Breast epithelium (tissue), 4 donors: ENCODE measurements at regions of chr2 and their contacts with region 1.

Region 1: GRCh38 chr2:142819411-142819810 is 58.1 kb upstream of the KYNU start:
- DNase-seq: no peak
- H3K4me3 ChIP-seq: no peak overlapping the region
- H3K27ac ChIP-seq: no peak overlapping the region
- H3K4me1 ChIP-seq: no peaks in the 10 kb centered on the region
- H3K27me3 ChIP-seq: no peaks in the 10 kb centered on the region
- CTCF ChIP-seq: no peak
- POLR2A ChIP-seq: no peak

Region 2: GRCh38 chr2:142714600-142714999 is 104.8 kb before region 1 on chr2:
- intact Hi-C with region 1: loop called (anchors 5 kb)
- DNase-seq: no peak
- H3K4me3 ChIP-seq: no peak overlapping the region
- H3K27ac ChIP-seq: no peak overlapping the region
- H3K4me1 ChIP-seq: no peaks in the 10 kb centered on the region
- H3K27me3 ChIP-seq: no peaks in the 10 kb centered on the region
- CTCF ChIP-seq: no peak
- POLR2A ChIP-seq: no peak

Region 3: DNA sequence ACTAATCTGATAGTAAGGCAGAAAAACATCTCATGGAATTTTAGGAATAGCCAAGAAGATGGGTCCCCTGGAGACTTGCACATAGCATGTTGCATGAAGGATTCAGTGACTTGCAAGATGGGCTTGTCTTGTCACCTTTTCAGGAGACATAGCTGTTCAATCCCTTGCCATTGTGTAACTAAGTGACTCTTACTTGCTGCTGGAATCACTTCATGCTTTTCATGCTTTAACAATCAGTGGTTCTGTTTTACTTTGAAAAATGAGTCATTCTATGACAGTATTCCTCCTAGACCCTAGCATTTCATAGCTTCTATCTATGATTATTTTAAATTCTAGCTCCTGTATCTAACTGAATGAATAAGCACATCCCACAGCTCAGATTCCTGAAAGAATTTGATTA is 60.8 kb after region 1 on chr2:
- intact Hi-C with region 1: no loop called
- DNase-seq: no peak
- H3K4me3 ChIP-seq: no peak overlapping the region
- H3K27ac ChIP-seq: no peak overlapping the region
- H3K4me1 ChIP-seq: no peaks in the 10 kb centered on the region
- H3K27me3 ChIP-seq: no peaks in the 10 kb centered on the region
- CTCF ChIP-seq: no peak
- POLR2A ChIP-seq: no peak